ENCODE measurements at regions of chr12 and their contacts with region 1.

Region 1: GRCh38 chr12:113135178-113136127 is at the start of gene RASAL1:
- DNase-seq: peak; percentile 86 to 87
- ATAC-seq: peak; percentile 79 to 90
- H3K4me3 ChIP-seq: peak within 1 kb of the TSS; percentile 53
- H3K27ac ChIP-seq: peak within 1 kb of the TSS; percentile 51 to 69; a peak in 4 of 6 replicates
- H3K4me1 ChIP-seq: peaks cover 18% of the 10 kb centered on the region
- CTCF ChIP-seq: peak; percentile 76
- EP300 ChIP-seq: no peak
- POLR2A ChIP-seq: no peak
- RAD21 ChIP-seq: no peak
- polyA plus RNA-seq, gene RASAL1: 0.34 and 0.36 TPM in 2 replicates

Region 2: GRCh38 chr12:112937741-112938719 is 197.4 kb before region 1 on chr12 and contains the start of gene OAS3:
- CTCF ChIA-PET with region 1: no interaction called
- POLR2A ChIA-PET with region 1: no interaction called
- DNase-seq: peak; percentile 73 to 82
- ATAC-seq: peak; percentile 74 to 91
- H3K4me3 ChIP-seq: peak within 1 kb of the TSS; percentile 59
- H3K27ac ChIP-seq: peak within 1 kb of the TSS; percentile 79 to 97
- H3K4me1 ChIP-seq: peaks cover 16% of the 10 kb centered on the region
- CTCF ChIP-seq: no peak
- EP300 ChIP-seq: no peak
- POLR2A ChIP-seq: peak; percentile 29; the same call in 1 of the 2 replicates
- RAD21 ChIP-seq: peak in 1 of 2 experiments; percentile 22; a peak in 2 of 5 replicates
- polyA plus RNA-seq, gene OAS3: 36.7 and 38.9 TPM in 2 replicates

Region 3: DNA sequence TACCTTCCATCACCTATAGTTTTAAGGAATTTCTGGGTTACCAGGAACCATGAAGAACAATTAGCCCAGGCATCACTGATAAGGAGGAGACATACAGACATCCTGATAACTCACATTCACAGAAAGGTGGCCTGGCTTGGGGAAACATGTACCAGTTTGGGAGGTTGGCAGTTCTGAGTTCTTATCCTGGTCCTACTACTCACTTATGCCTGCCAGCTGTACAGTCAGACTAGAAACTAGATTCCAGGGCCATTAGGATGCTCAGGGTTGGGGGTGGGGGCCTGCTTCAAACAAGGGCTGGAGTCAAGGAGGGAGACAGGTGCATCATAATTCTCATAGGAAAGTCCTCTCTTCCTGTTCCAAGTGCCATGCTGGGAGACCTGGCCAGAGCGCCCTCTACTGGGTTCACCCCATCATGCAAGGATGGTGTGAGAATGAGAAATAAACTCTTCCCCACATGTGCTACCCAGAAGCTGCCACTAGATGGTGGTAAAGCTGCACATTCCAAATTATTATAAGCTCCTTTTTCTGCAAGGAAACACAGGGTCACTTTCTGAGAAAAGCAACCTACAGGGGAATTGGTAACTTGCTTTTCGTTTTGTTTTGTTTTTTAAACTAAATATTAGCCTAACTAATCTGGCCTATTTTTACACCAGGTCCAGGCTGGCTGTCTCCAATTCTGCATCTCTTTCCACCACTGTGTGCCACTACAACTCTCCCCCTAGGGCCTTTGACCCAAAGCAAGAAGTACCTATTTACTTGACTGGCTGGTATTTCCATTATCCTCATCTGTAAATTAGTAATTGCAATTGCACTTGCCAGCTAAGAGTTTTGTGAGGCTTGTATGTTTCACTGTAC is 142.7 kb before region 1 on chr12:
- CTCF ChIA-PET with region 1: interaction called, 11 read pairs
- POLR2A ChIA-PET with region 1: no interaction called
- DNase-seq: peak; percentile 75 to 77
- ATAC-seq: peak; percentile 69 to 87; a peak in 4 of 6 replicates
- H3K4me3 ChIP-seq: no peak overlapping the region
- H3K27ac ChIP-seq: no peak overlapping the region
- H3K4me1 ChIP-seq: no peaks in the 10 kb centered on the region
- CTCF ChIP-seq: peak; percentile 81
- EP300 ChIP-seq: no peak
- POLR2A ChIP-seq: no peak
- RAD21 ChIP-seq: peak; percentile 81 to 92

Region 4: DNA sequence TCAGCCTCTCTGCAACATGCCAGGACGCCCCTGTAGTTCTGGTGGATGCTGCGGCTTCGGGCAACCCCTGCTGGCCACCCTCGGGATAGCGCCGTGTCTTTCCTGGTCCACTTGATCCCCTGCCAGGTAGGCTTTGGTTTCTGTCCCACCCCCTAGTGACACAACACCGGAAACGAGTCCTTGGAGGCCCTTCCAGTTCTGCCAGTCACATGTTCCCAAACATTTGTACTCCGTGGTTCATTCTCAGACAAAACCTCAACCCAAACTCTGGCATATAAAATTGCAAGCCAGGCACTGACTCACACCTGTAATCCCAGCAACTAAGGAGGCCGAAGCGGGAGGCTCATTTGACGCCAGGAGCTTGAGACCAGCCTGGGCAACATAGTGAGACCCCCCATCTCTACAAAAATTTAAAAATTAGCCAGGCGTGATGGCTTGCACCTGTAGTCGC is 37.0 kb before region 1 on chr12:
- CTCF ChIA-PET with region 1: interaction called, 15 read pairs
- POLR2A ChIA-PET with region 1: no interaction called
- DNase-seq: peak; percentile 89 to 95
- ATAC-seq: peak; percentile 75 to 86
- H3K4me3 ChIP-seq: no peak overlapping the region
- H3K27ac ChIP-seq: peak overlapping the region; percentile 41 to 44; a peak in 3 of 6 replicates
- H3K4me1 ChIP-seq: peaks cover 5% of the 10 kb centered on the region; the same call in 2 of the 3 replicates
- CTCF ChIP-seq: peak; percentile 76
- EP300 ChIP-seq: no peak
- POLR2A ChIP-seq: no peak
- RAD21 ChIP-seq: peak; percentile 80 to 86

Region 5: DNA sequence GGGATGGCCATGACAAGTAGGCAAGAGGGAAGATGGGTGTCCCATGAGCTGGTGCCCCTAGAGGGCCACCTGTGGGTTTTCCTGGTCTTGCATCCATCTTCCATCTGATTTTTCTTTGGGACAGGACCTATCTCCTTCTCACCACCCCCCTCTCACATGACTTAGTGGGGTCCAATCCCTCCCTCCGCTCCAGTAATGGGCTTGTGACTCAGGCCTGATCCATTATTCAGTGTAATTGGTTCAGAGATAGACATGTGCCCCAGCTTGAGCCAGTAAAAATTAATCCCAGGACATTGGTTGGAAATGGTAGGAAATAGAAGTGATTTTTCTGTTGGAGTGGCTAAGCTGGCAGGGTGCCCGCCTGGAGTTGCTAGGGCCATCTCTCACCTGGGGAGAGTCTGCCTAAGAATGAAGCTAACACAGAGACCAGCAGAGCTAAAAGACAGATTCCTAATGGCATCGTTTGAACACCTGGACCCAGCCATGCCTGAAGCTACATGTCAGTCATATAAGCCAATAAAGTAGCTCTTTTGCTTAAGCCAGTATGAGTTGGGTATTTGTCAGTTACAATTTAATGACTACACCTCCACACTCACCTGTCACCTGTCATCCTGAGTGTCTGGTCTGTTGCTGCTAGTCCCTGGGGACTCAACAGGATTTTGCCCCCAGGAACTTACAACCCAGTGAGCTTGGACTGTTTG is 14.6 kb before region 1 on chr12:
- CTCF ChIA-PET with region 1: interaction called, 17 read pairs
- POLR2A ChIA-PET with region 1: no interaction called
- DNase-seq: peak in 1 of 2 experiments; percentile 31
- ATAC-seq: peak; percentile 31 to 62; a peak in 4 of 6 replicates
- H3K4me3 ChIP-seq: no peak overlapping the region
- H3K27ac ChIP-seq: no peak overlapping the region
- H3K4me1 ChIP-seq: no peaks in the 10 kb centered on the region
- CTCF ChIP-seq: no peak
- EP300 ChIP-seq: no peak
- POLR2A ChIP-seq: no peak
- RAD21 ChIP-seq: no peak

Region 6: DNA sequence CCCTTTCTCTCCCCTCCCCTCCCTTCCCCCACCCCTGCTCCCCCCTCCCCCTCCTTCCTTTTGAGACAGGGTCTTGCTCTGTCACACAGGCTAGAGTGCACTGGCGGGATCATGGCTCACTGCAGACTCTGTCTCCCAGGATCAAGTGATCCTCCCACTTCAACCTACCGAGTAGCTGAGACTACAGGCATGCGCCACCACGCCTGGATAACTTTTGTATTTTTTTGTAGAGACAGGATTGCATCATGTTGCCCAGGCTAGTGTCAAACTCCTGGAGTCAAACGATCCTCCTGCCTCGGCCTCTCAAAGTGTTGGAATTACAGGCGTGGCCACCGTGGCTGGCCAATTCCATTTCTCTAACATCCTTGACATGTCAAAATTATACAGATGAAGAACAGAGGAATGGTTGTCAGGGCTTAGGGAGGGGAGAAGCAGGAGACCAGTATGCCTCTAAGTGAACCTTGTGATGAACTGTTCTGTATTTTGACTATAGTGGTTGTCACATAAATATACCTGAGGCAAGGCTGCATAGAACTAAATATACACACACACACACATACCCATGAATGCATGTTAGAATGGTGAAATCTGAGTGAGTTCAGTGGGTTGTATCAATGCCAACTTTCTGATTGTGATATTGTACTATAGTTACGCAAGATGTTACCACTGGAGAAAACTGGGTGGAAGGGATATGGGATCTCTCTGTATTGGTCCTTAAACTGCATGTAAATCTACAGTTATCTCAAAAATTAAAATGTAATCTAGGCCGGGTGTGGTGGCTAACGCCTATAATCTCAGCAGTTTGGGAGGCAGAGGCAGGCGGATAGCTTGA is 10.5 kb after region 1 on chr12:
- CTCF ChIA-PET with region 1: interaction called, 55 read pairs
- POLR2A ChIA-PET with region 1: no interaction called
- DNase-seq: no peak
- ATAC-seq: no peak
- H3K4me3 ChIP-seq: no peak overlapping the region
- H3K27ac ChIP-seq: no peak overlapping the region
- H3K4me1 ChIP-seq: peaks cover 6% of the 10 kb centered on the region; the same call in 1 of the 3 replicates
- CTCF ChIP-seq: no peak
- EP300 ChIP-seq: no peak
- POLR2A ChIP-seq: no peak
- RAD21 ChIP-seq: no peak

Region 7: DNA sequence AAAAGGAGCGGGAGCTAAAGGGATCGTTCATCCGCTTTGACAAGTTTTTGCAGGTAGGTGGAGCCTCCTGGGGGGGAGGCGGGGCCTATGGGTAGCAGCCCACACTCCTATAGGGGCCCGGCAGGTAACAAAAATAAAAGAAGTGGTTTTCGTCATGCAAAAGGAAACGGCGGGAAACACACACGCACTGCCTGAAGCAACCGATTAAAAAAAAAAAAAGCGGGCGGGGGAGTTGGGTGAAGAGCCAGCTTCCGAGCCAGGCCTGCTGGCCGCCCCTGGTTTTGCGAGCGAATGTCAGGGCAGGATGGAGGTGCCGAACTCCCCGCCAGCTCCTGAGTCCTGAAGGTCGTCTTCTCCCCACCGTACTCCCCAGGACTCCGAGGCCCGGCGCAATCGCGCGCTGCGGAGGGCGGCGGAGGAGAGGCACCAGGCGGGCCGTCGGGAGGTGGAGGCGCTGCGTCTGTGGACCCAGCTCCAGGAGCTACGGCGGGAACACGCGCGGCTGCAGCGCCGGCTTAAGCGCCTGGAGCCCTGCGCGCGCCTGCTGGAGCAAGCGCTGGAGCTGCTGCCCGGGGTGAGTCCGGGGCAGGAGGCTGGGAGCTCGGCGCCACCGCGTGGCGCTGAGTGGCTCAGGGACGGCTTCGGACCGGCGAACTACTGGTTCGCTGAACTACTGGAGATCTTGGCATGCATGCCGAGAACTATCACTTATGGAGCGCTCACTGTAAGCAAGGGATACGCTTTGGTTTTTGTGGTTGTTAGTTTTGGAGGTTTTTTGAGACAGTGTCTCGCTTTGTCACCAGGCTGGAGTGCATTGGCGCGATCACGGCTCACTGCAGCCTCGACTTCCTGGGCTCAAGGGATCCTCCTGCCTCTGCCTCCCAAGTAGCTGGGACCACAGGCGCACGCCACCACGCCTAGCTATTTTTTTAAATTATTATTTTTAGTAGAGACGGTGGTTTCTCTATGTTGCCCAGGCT is 17.7 kb after region 1 on chr12:
- CTCF ChIA-PET with region 1: interaction called, 55 read pairs
- POLR2A ChIA-PET with region 1: no interaction called
- DNase-seq: peak; percentile 90 to 92
- ATAC-seq: peak; percentile 83 to 92
- H3K4me3 ChIP-seq: peak overlapping the region; percentile 43
- H3K27ac ChIP-seq: peak overlapping the region in 1 of 2 experiments; percentile 69; a peak in 2 of 6 replicates
- H3K4me1 ChIP-seq: peaks cover 6% of the 10 kb centered on the region; the same call in 1 of the 3 replicates
- CTCF ChIP-seq: peak; percentile 65
- EP300 ChIP-seq: no peak
- POLR2A ChIP-seq: no peak
- RAD21 ChIP-seq: peak; percentile 67 to 75

Region 8: GRCh38 chr12:113174461-113175384 is 39.3 kb after region 1 on chr12:
- CTCF ChIA-PET with region 1: interaction called, 35 read pairs
- POLR2A ChIA-PET with region 1: no interaction called
- DNase-seq: peak; percentile 68 to 88
- ATAC-seq: peak; percentile 87 to 92
- H3K4me3 ChIP-seq: no peak overlapping the region
- H3K27ac ChIP-seq: no peak overlapping the region
- H3K4me1 ChIP-seq: no peaks in the 10 kb centered on the region
- CTCF ChIP-seq: peak; percentile 91
- EP300 ChIP-seq: no peak
- POLR2A ChIP-seq: no peak
- RAD21 ChIP-seq: peak; percentile 79 to 85